ENCODE measurements at regions of chr3 and their contacts with region 1.

Region 1: GRCh38 chr3:90091204-90091924 is 983.9 kb downstream of the EPHA3 start:
- DNase-seq: peak; percentile 59
- ATAC-seq: peak; percentile 92
- H3K4me3 ChIP-seq: no peak overlapping the region
- H3K27ac ChIP-seq: no peak overlapping the region
- H3K4me1 ChIP-seq: no peaks in the 10 kb centered on the region
- H3K27me3 ChIP-seq: no peaks in the 10 kb centered on the region; the same call in 1 of the 2 replicates
- CTCF ChIP-seq: peak; percentile 68

Region 2: GRCh38 chr3:89851974-89852621 is 239.3 kb before region 1 on chr3:
- CTCF ChIA-PET with region 1: no interaction called
- POLR2A ChIA-PET with region 1: no interaction called
- intact Hi-C with region 1: loop called (anchors 5 kb)
- DNase-seq: peak; percentile 76
- ATAC-seq: peak; percentile 73
- H3K4me3 ChIP-seq: no peak overlapping the region
- H3K27ac ChIP-seq: no peak overlapping the region
- H3K4me1 ChIP-seq: no peaks in the 10 kb centered on the region
- H3K27me3 ChIP-seq: 0 out of 2 replicates have a peak, but pooled peaks cover 11% of the 10 kb centered on the region
- CTCF ChIP-seq: peak; percentile 92

Region 3: DNA sequence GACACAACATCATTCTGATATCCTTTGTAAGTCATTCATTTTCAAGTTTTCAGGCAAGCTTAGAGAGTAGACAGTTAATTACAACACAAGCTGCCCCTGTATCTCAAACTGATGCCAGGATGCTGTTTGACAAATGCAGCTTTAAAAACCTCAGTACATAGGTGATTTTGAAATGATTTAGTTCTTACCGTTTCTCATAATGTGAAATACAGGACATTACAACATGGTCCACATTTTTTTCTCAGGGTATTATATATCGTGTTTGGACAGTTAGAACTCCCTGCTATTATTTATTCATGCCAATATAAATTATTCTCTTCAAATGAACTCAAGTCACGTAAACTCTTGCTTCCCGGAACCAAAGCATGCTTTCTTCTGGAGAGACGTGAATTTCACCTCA is 30.0 kb after region 1 on chr3:
- CTCF ChIA-PET with region 1: no interaction called
- POLR2A ChIA-PET with region 1: no interaction called
- intact Hi-C with region 1: no loop called
- DNase-seq: no peak
- ATAC-seq: no peak
- H3K4me3 ChIP-seq: no peak overlapping the region
- H3K27ac ChIP-seq: no peak overlapping the region
- H3K4me1 ChIP-seq: no peaks in the 10 kb centered on the region
- H3K27me3 ChIP-seq: peaks cover 2% of the 10 kb centered on the region; the same call in 1 of the 2 replicates
- CTCF ChIP-seq: no peak